Naive thymus-derived CD4-positive, alpha-beta T cell (primary cell): ENCODE measurements at regions of chr17 and their contacts with region 1.

Region 1: DNA sequence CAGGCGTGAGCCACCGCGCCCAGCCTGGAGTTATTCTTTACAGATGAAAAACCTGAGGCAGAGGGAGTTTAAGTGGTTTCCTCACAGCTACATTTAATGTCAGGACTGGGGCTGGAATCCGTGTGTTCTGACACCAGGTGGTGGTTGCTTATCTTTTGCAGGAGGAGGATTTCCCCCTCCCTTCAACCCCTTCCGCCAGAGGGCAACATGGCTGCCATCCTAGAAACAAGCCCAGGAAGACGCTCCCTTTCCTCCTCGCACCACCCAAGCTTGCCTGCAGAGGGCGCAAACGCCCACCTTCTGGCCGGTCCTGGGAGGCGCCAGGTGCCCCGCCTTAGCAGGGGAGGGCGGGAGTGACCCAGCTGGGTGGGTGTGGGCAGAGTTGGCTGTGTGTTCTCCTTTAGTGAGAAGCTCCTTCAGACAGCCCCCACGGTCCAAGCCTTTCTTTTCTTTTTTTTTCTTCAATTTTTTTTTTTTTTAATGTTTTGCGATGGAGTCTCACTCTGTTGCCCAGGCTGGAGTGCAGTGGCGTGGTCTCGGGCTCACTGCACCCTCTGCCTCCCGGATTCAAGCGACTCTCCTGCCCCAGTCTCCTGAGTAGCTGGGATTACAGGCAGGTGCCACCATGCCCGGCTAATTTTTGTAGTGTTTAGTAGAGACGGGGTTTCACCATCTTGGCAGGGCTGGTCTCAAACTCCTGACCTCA is 9.9 kb upstream of the RAP1GAP2 start:
- DNase-seq: peak; percentile 79 to 93 (median 87)
- ATAC-seq: peak; percentile 99
- H3K4me3 ChIP-seq: no peak overlapping the region
- H3K4me3 Mint-ChIP-seq: peak overlapping the region in 7 of 10 donors; percentile 21 to 53 (median 42)
- H3K27ac ChIP-seq: no peak overlapping the region
- H3K27ac Mint-ChIP-seq: peak overlapping the region in 2 of 9 donors; percentile 10 to 52
- H3K4me1 ChIP-seq: peaks cover 3 to 23% of the 10 kb centered on the region in 2 donors
- H3K4me1 Mint-ChIP-seq: peaks cover 3 to 16% (median 10%) of the 10 kb centered on the region in 7 donors
- H3K27me3 ChIP-seq: no peaks in the 10 kb centered on the region
- H3K27me3 Mint-ChIP-seq: peaks cover 0 to 23% (median 0%) of the 10 kb centered on the region in 5 donors

Region 2: GRCh38 chr17:2770129-2770528 is 16.2 kb before region 1 on chr17:
- CTCF ChIA-PET with region 1: no interaction called
- POLR2A ChIA-PET with region 1: no interaction called
- intact Hi-C with region 1: no loop called
- DNase-seq: no peak
- ATAC-seq: no peak
- H3K4me3 ChIP-seq: no peak overlapping the region
- H3K4me3 Mint-ChIP-seq: no peak overlapping the region
- H3K27ac ChIP-seq: no peak overlapping the region
- H3K27ac Mint-ChIP-seq: no peak overlapping the region
- H3K4me1 ChIP-seq: no peaks in the 10 kb centered on the region
- H3K4me1 Mint-ChIP-seq: no peaks in the 10 kb centered on the region
- H3K27me3 ChIP-seq: no peaks in the 10 kb centered on the region
- H3K27me3 Mint-ChIP-seq: peaks cover 19 to 32% (median 21%) of the 10 kb centered on the region in 5 donors

Region 3: DNA sequence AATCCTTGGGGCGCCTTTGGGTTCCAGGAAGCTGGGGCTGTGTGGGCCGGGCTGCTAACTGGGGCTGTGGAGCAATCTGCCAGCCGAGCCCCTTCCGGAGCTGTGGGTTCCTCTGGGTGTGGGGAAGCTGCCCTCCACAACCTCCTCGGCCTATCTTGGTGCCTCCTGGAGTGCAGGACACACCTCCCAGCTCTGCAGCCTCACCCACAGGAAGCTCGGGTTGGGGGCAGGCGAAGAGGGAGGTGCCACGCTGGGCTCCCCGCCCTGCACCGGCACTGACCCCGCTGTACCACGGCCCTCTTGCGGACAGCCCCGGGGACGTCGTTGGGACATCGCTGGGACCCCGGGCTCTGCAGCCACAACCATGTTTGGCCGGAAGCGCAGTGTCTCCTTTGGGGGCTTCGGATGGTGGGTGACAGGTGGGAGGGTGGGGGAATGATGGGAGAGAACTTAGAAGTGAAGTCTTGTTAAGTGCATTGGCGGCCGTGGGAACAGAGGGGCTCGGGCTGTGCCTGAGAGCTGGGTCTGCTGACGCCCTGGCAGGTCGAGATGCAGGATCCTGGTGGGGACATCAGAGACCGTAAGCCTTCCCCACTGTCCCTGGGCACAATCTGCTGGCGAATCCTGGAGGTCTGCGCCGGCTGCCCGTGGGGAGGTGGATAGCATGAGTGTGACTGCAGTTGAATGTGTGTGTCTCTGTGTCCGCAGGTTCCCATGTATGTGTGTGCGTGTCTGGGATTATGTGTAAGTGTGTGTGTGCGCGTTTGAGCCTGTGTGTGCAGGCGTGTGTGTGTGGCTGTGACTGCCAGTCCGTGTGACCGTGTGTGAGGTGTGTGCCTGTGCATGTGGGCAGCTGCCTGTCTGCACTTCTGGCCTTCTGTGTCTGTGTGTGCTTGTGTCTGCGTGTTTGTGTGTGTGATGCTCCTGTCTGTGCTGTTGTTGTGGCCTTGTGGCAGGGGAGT is 10.1 kb after region 1 on chr17 and contains the start of gene RAP1GAP2:
- CTCF ChIA-PET with region 1: interaction called, 11 read pairs
- POLR2A ChIA-PET with region 1: interaction called, 4 read pairs
- intact Hi-C with region 1: loop called in 1 of 2 experiments (anchors 1 kb)
- DNase-seq: peak; percentile 49 to 75 (median 66)
- ATAC-seq: peak; percentile 91
- H3K4me3 ChIP-seq: peak within 1 kb of the TSS; percentile 87
- H3K4me3 Mint-ChIP-seq: peak within 1 kb of the TSS; percentile 83 to 100 (median 93)
- H3K27ac ChIP-seq: no peak within 1 kb of the TSS
- H3K27ac Mint-ChIP-seq: peak within 1 kb of the TSS; percentile 53 to 91 (median 74)
- H3K4me1 ChIP-seq: peaks cover 52 to 61% of the 10 kb centered on the region in 2 donors
- H3K4me1 Mint-ChIP-seq: peaks cover 58 to 86% (median 74%) of the 10 kb centered on the region in 7 donors
- H3K27me3 ChIP-seq: no peaks in the 10 kb centered on the region
- H3K27me3 Mint-ChIP-seq: peaks cover 0 to 4% (median 0%) of the 10 kb centered on the region in 5 donors
- total RNA-seq, gene RAP1GAP2: 0.54 to 95.6 (median 20.8) TPM

Region 4: DNA sequence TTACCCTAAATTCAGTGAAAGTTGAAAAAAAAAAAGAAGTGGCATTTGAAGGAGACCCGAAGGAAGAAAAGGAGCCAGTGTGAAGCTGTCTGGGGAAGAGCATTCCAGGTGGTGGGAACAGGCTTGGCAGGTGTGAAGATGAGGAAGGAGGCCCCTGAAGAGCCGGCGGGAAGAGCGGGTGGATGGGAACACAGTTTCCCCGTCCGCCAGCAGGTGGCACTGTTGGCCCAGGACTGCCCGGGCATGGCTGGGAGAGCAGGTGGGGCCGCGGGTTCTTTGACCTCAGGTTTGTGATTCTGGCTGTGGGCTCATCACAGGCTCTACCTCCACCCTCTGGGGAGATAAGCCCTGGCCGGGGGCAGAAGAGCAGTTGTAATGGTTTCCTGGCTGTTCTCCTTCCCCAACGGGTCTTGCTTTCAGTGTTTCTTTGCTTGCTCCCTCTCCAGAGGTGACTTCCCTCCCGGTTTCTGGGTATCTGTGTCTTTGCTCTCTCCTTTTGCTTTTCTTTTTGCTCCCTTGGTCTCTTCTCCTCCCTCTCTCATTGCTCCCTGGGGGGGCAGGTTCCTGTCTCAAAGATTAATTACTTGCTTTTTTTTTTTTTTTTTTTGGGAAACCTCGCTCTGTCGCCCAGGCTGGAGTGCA is 42.2 kb after region 1 on chr17:
- CTCF ChIA-PET with region 1: interaction called, 16 read pairs
- POLR2A ChIA-PET with region 1: no interaction called
- intact Hi-C with region 1: loop called in 1 of 2 experiments (anchors 1 kb)
- DNase-seq: peak; percentile 48 to 85 (median 65)
- ATAC-seq: peak; percentile 92
- H3K4me3 ChIP-seq: peak overlapping the region; percentile 40
- H3K4me3 Mint-ChIP-seq: peak overlapping the region in 9 of 10 donors; percentile 30 to 82 (median 56)
- H3K27ac ChIP-seq: no peak overlapping the region
- H3K27ac Mint-ChIP-seq: peak overlapping the region in 3 of 9 donors; percentile 34 to 76 (median 68)
- H3K4me1 ChIP-seq: peaks cover 8% of the 10 kb centered on the region in 2 donors
- H3K4me1 Mint-ChIP-seq: peaks cover 23 to 34% (median 29%) of the 10 kb centered on the region in 7 donors
- H3K27me3 ChIP-seq: no peaks in the 10 kb centered on the region
- H3K27me3 Mint-ChIP-seq: peaks cover 0 to 13% (median 1%) of the 10 kb centered on the region in 5 donors

Region 5: GRCh38 chr17:2837147-2837561 is 50.8 kb after region 1 on chr17:
- CTCF ChIA-PET with region 1: interaction called, 21 read pairs
- POLR2A ChIA-PET with region 1: interaction called, 3 read pairs
- intact Hi-C with region 1: loop called (anchors 1 kb)
- DNase-seq: peak in 8 of 9 donors; percentile 26 to 54 (median 42)
- ATAC-seq: peak; percentile 93
- H3K4me3 ChIP-seq: no peak overlapping the region
- H3K4me3 Mint-ChIP-seq: no peak overlapping the region
- H3K27ac ChIP-seq: no peak overlapping the region
- H3K27ac Mint-ChIP-seq: no peak overlapping the region
- H3K4me1 ChIP-seq: no peaks in the 10 kb centered on the region
- H3K4me1 Mint-ChIP-seq: peaks cover 0 to 14% (median 9%) of the 10 kb centered on the region in 7 donors
- H3K27me3 ChIP-seq: no peaks in the 10 kb centered on the region
- H3K27me3 Mint-ChIP-seq: peaks cover 0 to 3% (median 0%) of the 10 kb centered on the region in 5 donors

Region 6: DNA sequence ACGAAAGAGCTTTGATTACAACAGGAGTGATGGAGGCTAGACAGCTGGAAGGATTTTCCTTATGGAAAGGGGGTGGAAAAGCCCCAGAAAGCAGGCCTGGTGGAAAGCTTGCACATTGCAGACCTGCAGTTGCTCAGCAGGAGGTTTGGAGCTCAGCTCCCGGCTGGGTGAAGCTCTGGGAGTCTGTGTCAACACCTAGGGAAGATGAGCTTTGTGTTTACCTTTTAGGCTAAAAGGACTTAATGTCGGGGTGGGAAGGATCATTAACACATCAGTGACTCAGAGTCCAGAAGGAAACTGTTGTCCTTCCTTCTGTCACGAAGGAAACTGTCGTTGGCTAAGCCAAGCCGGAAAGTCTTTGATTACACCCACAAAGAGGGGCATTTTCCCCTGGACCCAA is 58.1 kb after region 1 on chr17:
- CTCF ChIA-PET with region 1: interaction called, 7 read pairs
- POLR2A ChIA-PET with region 1: no interaction called
- intact Hi-C with region 1: loop called in 1 of 2 experiments (anchors 1 kb)
- DNase-seq: no peak
- ATAC-seq: no peak
- H3K4me3 ChIP-seq: no peak overlapping the region
- H3K4me3 Mint-ChIP-seq: no peak overlapping the region
- H3K27ac ChIP-seq: no peak overlapping the region
- H3K27ac Mint-ChIP-seq: no peak overlapping the region
- H3K4me1 ChIP-seq: peaks cover 0 to 3% of the 10 kb centered on the region in 2 donors
- H3K4me1 Mint-ChIP-seq: peaks cover 13 to 23% (median 17%) of the 10 kb centered on the region in 7 donors
- H3K27me3 ChIP-seq: no peaks in the 10 kb centered on the region
- H3K27me3 Mint-ChIP-seq: peaks cover 0 to 5% (median 4%) of the 10 kb centered on the region in 5 donors

Region 7: DNA sequence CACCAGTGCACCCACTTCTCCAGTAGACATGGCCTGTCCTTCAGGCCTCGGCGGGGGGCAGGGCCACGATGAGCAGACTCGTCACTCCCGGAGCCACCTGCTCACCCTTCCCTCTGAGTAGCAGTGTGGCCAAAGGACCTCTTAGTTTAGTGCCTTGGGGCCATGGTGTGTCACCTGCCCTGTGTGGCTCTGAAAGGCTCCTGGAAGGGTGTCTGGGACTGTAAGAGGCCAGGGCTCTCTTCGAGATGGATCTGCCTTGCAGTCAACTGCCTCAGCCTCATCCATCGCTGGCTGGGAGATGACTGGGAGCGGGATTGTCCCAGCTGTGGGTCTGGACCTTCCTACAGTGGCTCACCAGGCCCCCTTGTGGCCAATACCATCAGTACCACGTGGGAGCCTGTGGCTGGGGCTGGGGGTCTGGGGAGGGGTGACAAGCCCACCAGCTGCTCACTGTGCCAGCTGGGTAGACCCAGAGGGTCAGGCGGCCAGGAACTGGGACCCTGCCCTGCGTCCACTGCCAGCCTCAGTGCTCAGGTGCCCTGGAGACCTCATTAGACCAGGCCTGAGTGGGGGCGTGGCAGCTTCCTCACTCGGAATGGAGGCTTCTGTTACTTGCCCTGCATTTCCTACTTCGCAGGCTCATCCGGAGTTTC is 143.7 kb after region 1 on chr17:
- CTCF ChIA-PET with region 1: interaction called, 11 read pairs
- POLR2A ChIA-PET with region 1: no interaction called
- intact Hi-C with region 1: loop called in 1 of 2 experiments (anchors 1 kb)
- DNase-seq: peak in 2 of 9 donors; percentile 3 to 12
- ATAC-seq: peak; percentile 48
- H3K4me3 ChIP-seq: no peak overlapping the region
- H3K4me3 Mint-ChIP-seq: no peak overlapping the region
- H3K27ac ChIP-seq: no peak overlapping the region
- H3K27ac Mint-ChIP-seq: no peak overlapping the region
- H3K4me1 ChIP-seq: no peaks in the 10 kb centered on the region
- H3K4me1 Mint-ChIP-seq: peaks cover 6 to 25% (median 18%) of the 10 kb centered on the region in 7 donors
- H3K27me3 ChIP-seq: no peaks in the 10 kb centered on the region
- H3K27me3 Mint-ChIP-seq: no peaks in the 10 kb centered on the region

Region 8: DNA sequence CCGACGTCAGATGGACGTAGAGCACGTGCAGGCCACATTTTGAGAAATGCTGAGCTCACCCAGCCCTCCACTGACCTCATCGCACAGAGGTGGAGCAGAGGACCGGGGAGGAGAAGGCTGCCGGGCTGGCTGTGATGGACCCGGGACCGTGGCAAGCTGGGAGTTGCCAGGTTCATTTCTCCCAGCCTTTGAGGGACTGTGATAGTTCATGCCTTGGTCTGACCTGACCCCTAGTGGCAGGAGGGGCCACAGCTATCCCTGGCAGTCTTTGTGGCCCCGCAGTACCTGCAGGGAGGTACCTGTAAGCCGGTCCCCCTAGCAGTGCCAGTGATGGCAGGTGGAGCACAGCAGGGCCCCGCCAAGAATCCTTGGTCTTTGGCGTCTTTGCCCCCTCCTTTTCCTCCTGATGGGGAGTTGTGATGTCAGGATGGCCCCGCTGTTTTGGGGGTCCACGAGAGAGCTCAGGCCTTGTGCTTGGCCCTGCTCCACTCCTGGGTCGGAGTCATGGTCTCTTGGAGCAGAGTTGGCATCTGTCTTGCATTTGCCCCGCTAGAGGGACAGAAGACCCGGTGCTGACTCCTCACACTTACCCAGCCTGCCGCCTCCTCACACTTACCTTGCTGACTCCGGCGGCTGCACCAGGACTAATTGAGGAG is 226.7 kb after region 1 on chr17:
- CTCF ChIA-PET with region 1: interaction called, 4 read pairs
- POLR2A ChIA-PET with region 1: interaction called, 3 read pairs
- intact Hi-C with region 1: loop called (anchors 1 kb)
- DNase-seq: peak; percentile 38 to 62 (median 53)
- ATAC-seq: peak; percentile 82
- H3K4me3 ChIP-seq: no peak overlapping the region
- H3K4me3 Mint-ChIP-seq: no peak overlapping the region
- H3K27ac ChIP-seq: no peak overlapping the region
- H3K27ac Mint-ChIP-seq: no peak overlapping the region
- H3K4me1 ChIP-seq: no peaks in the 10 kb centered on the region
- H3K4me1 Mint-ChIP-seq: peaks cover 0 to 3% (median 0%) of the 10 kb centered on the region in 7 donors
- H3K27me3 ChIP-seq: no peaks in the 10 kb centered on the region
- H3K27me3 Mint-ChIP-seq: no peaks in the 10 kb centered on the region